ENCODE measurements at regions of chr14 and their contacts with region 1.

Region 1: DNA sequence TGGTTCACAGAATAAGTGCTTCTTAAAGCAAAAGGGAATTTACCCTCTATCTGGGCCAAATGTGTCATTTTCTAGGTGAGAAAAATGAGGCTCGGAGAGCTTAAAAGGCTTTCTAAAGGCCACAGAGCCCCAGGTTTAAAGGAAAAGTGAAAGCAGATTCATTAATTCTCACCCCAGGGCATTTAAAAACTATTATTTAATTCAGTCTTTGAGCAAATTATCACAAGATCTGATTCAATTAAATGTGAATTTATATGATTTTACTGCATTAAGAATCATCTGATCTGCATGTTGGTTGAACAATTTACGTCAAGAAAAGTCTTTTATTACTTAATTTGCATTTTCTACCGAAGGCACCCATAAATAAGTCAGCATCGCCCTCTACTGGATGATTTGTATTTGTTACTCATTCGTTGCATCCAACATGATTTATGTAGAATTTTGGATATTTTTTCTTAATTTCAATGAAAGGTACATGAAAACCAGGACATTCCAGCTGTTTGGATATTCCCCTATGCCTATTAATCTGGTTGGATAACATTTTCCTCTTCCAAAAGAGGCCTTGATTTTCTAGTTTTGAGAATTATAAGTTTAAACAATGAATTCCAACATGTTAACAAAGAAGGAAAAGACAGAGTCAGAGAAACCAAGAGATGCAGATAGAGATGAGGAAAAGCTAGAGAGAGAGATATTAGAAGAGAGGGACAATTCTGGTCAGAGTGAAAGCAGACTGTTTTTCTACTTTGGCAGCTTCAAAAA is 19.1 kb upstream of the DHRS7 start:
- DNase-seq: peak; percentile 46
- H3K4me3 ChIP-seq: peak overlapping the region; percentile 47
- H3K27ac ChIP-seq: no peak overlapping the region
- H3K27me3 ChIP-seq: no peaks in the 10 kb centered on the region
- CTCF ChIP-seq: peak; percentile 68

Region 2: GRCh38 chr14:59632381-59632780 is 551.9 kb before region 1 on chr14:
- CTCF ChIA-PET with region 1: interaction called, 24 read pairs
- POLR2A ChIA-PET with region 1: no interaction called
- DNase-seq: no peak
- H3K4me3 ChIP-seq: no peak overlapping the region
- H3K27ac ChIP-seq: no peak overlapping the region
- H3K27me3 ChIP-seq: peaks cover 13% of the 10 kb centered on the region
- CTCF ChIP-seq: peak; percentile 63

Region 3: GRCh38 chr14:60064491-60065072 is 119.7 kb before region 1 on chr14:
- CTCF ChIA-PET with region 1: interaction called, 188 read pairs
- POLR2A ChIA-PET with region 1: no interaction called
- DNase-seq: peak; percentile 3
- H3K4me3 ChIP-seq: no peak overlapping the region
- H3K27ac ChIP-seq: no peak overlapping the region
- H3K27me3 ChIP-seq: no peaks in the 10 kb centered on the region
- CTCF ChIP-seq: peak; percentile 67

Region 4: DNA sequence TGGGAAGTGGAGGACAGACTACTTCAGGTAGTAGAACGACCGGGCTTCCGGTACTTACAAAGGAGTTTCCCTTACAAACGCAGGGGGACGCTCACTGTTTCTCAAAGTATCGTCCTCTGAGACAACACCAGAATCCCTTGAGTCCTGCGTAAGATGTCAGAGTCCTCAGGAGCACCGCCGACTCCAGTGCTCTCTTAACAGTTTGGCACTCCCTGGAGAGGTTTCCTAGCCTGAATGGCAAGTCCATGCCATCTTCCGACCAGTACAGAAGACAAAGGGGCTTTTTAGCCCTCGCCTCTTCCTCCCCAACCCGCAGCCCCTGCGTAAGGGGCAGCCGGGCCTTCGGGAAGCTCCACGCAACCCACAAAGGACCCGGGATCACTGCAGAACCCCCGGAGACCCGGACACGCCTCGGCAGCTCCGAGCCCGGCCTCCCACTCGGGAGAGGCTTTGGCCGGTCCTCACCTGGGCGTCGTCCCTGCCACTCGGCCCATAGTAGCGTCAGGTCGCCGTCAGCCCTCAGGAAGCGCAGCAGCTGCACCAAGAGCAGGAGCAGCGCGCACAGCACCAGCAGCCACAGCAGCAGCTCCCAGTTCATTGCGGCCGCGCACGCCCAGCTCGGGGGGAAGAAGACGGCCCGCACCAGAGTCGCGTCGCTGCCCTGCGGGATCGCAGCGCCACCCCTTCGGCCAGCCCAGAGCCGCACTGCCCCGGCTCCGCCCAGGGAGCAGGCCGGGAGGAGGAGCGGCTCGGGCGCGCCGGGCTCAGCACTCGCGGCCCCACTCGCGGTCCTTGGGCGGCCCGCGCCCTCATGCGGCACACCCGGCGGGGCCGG is 19.4 kb before region 1 on chr14 and contains the start of gene DHRS7:
- CTCF ChIA-PET with region 1: interaction called, 15 read pairs
- POLR2A ChIA-PET with region 1: no interaction called
- DNase-seq: peak; percentile 24
- H3K4me3 ChIP-seq: peak within 1 kb of the TSS; percentile 89
- H3K27ac ChIP-seq: peak within 1 kb of the TSS; percentile 88
- H3K27me3 ChIP-seq: no peaks in the 10 kb centered on the region
- CTCF ChIP-seq: peak; percentile 12; the same call in 1 of the 2 replicates
- polyA plus RNA-seq, gene DHRS7: 51.3 and 73.1 TPM in 2 replicates

Region 5: DNA sequence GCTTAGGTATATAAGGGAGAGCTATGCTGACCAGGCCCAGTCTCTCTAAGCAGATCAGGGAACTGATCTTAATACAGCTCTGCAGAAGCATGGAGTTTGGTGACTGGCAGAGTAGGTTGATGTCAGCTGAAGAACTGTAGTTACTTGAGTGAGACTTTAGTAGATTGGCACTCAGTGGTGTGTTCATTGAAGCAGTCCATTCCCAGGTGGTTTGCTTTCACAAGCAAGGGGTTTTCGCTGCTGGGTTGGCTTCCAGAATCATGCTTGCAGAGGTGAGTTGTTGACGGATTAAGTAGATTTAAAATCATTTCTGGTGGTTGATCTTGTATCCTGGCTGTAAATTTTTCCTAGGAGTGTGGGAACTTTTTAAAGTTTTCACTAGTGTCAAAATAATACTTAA is 12.6 kb before region 1 on chr14:
- CTCF ChIA-PET with region 1: interaction called, 15 read pairs
- POLR2A ChIA-PET with region 1: no interaction called
- DNase-seq: no peak
- H3K4me3 ChIP-seq: no peak overlapping the region
- H3K27ac ChIP-seq: no peak overlapping the region
- H3K27me3 ChIP-seq: no peaks in the 10 kb centered on the region
- CTCF ChIP-seq: no peak